GM12878 (cell line): ENCODE measurements at regions of chr11 and their contacts with region 1.

Region 1: GRCh38 chr11:96342961-96343711 is at the start of gene MAML2:
- DNase-seq: peak; percentile 91
- ATAC-seq: peak; percentile 81
- H3K4me3 ChIP-seq: peak within 1 kb of the TSS; percentile 100
- H3K27ac ChIP-seq: peak within 1 kb of the TSS; percentile 80
- H3K4me1 ChIP-seq: peaks cover 12% of the 10 kb centered on the region
- H3K27me3 ChIP-seq: no peaks in the 10 kb centered on the region
- CTCF ChIP-seq: peak; percentile 93 to 98 (median 96)
- EP300 ChIP-seq: no peak; a peak in 1 of 4 replicates
- POLR2A ChIP-seq: no peak; the same call in 1 of the 2 replicates
- RAD21 ChIP-seq: peak; percentile 90
- polyA plus RNA-seq, gene MAML2: 2.5 to 2.6 TPM

Region 2: GRCh38 chr11:95790123-95790932 is 552.8 kb before region 1 on chr11 and contains the start of gene CEP57:
- CTCF ChIA-PET with region 1: interaction called, 16 read pairs
- POLR2A ChIA-PET with region 1: interaction called, 3 read pairs
- RAD21 ChIA-PET with region 1: interaction called, 3 read pairs
- SMC1A ChIA-PET with region 1: interaction called, 6 read pairs
- in situ Hi-C with region 1: no loop called
- intact Hi-C with region 1: no loop called
- DNase-seq: peak; percentile 92
- ATAC-seq: peak; percentile 73
- H3K4me3 ChIP-seq: peak within 1 kb of the TSS; percentile 87
- H3K27ac ChIP-seq: peak within 1 kb of the TSS; percentile 90
- H3K4me1 ChIP-seq: 0 out of 2 replicates have a peak, but pooled peaks cover 3% of the 10 kb centered on the region
- H3K27me3 ChIP-seq: no peaks in the 10 kb centered on the region
- CTCF ChIP-seq: no peak
- EP300 ChIP-seq: 0 out of 4 replicates have a peak, but pooled peaks of 1 of the 2 experiments have one; percentile 40
- POLR2A ChIP-seq: peak; percentile 77
- RAD21 ChIP-seq: no peak
- polyA plus RNA-seq, gene CEP57: 19.4 to 25.8 TPM

Region 3: DNA sequence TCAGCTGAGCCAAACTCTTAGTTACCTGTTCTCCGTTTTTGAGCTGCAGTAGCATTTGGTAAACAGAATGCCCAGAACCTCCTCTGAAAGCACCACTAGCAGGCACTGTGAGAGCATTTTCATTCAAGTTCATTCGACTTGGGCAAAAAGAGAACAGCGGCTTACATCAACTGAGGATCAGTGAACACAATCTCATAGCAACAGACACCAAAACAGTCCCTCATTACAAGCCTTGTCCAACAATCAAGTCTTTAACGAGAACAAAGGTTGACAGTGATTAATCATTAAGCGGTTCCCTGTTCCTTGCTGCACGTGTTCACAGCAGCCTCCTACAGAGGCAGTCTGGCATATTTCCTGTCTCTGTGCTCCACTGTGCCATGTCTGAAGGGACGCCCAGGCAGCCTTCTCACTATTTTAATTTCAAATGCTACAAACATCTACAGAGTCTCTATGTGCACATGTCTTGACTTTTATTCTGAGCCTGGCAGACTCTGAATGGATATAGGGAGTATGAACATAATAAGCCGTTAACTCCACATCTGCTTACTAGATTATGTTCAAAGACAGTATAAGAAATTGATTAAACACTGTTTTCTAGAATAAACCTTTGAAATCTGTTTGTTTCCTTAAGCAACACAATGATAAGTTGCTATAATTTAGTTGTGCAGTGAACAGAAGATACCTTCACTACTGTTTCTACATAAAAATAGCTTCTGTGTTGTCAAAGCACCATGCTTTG is 330.9 kb before region 1 on chr11:
- CTCF ChIA-PET with region 1: interaction called, 134 read pairs
- POLR2A ChIA-PET with region 1: interaction called, 18 read pairs
- RAD21 ChIA-PET with region 1: interaction called, 94 read pairs
- SMC1A ChIA-PET with region 1: interaction called, 147 read pairs
- in situ Hi-C with region 1: no loop called
- intact Hi-C with region 1: loop called (anchors 1 kb)
- DNase-seq: peak; percentile 96
- ATAC-seq: peak; percentile 93
- H3K4me3 ChIP-seq: no peak overlapping the region
- H3K27ac ChIP-seq: peak overlapping the region; percentile 59
- H3K4me1 ChIP-seq: peaks cover 32% of the 10 kb centered on the region
- H3K27me3 ChIP-seq: no peaks in the 10 kb centered on the region
- CTCF ChIP-seq: peak; percentile 78 to 91 (median 87)
- EP300 ChIP-seq: peak; percentile 76 to 86; a peak in 2 of 4 replicates
- POLR2A ChIP-seq: no peak
- RAD21 ChIP-seq: peak; percentile 84

Region 4: DNA sequence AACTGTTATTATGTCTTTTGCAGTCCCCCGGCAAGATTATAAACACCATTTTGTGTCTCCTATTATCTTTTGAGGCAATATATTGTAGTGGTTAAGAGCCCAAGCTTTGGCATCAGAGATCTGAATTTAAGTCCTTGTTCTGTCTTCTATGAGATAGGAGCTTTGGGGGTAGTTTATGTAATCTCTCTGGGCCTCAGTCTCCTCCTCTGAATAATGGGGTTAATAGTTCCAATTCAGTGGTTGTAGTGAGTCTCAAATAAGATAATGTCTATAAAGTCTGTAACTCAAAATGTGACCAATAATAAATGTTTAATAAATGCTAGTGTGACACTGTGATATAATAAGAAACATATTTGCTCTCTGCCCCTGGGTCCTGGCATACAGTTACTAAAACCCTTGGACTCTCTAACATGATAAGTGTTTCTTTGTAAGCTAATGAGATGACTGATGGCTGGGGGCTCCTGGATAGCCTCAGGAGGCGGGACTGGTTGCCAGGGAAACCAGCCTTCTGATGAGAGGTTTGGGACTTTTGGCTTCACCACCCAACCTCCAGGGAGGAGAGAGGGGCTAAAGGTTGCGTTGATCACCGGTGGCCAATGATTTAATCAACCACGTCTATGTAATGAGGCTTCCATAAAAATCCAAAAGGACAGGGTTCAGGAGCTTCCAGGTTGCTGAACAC is 235.9 kb before region 1 on chr11:
- CTCF ChIA-PET with region 1: interaction called, 3 read pairs
- POLR2A ChIA-PET with region 1: no interaction called
- RAD21 ChIA-PET with region 1: interaction called, 3 read pairs
- SMC1A ChIA-PET with region 1: interaction called, 11 read pairs
- in situ Hi-C with region 1: no loop called
- intact Hi-C with region 1: loop called (anchors 2 kb)
- DNase-seq: no peak
- ATAC-seq: no peak
- H3K4me3 ChIP-seq: no peak overlapping the region
- H3K27ac ChIP-seq: no peak overlapping the region
- H3K4me1 ChIP-seq: peaks cover 12% of the 10 kb centered on the region
- H3K27me3 ChIP-seq: no peaks in the 10 kb centered on the region
- CTCF ChIP-seq: no peak
- EP300 ChIP-seq: no peak
- POLR2A ChIP-seq: no peak
- RAD21 ChIP-seq: no peak

Region 5: GRCh38 chr11:96197801-96198701 is 145.1 kb before region 1 on chr11:
- CTCF ChIA-PET with region 1: interaction called, 12 read pairs
- POLR2A ChIA-PET with region 1: interaction called, 3 read pairs
- RAD21 ChIA-PET with region 1: interaction called, 9 read pairs
- SMC1A ChIA-PET with region 1: interaction called, 21 read pairs
- in situ Hi-C with region 1: no loop called
- intact Hi-C with region 1: no loop called
- DNase-seq: no peak
- ATAC-seq: peak; percentile 83
- H3K4me3 ChIP-seq: 0 out of 2 replicates have a peak overlapping the region, but pooled peaks have one; percentile 3
- H3K27ac ChIP-seq: peak overlapping the region; percentile 98
- H3K4me1 ChIP-seq: peaks cover 41% of the 10 kb centered on the region
- H3K27me3 ChIP-seq: no peaks in the 10 kb centered on the region
- CTCF ChIP-seq: no peak
- EP300 ChIP-seq: peak; percentile 82 to 97
- POLR2A ChIP-seq: no peak
- RAD21 ChIP-seq: no peak; the same call in 1 of the 2 replicates

Region 6: DNA sequence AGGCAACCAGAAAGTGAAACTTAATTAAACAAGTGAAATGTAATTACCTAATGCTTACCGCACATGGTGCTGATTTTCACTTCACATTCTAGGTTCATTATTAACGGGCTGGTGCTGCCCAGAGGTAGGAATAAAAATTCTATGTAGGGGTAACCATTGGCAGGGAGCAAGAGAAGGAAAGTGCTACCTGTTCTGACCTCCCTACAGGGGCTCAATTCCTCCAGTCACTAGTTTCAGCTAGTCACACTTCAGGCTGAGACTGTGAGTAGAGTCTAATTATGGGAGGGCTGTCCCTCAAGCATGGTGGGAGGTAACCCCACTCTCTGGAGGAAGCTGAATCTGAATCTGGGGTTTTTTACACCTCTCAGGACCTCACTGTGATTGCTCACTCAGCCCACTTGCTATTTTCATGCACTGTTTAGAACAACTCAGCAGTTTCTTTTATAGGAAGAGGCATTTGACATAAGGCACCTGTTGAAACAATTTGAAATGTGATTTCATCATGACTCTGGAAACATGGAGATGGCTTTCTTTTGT is 75.6 kb before region 1 on chr11:
- CTCF ChIA-PET with region 1: interaction called, 12 read pairs
- POLR2A ChIA-PET with region 1: interaction called, 7 read pairs
- RAD21 ChIA-PET with region 1: interaction called, 55 read pairs
- SMC1A ChIA-PET with region 1: interaction called, 57 read pairs
- in situ Hi-C with region 1: no loop called
- intact Hi-C with region 1: loop called (anchors 2 kb)
- DNase-seq: peak; percentile 95
- ATAC-seq: peak; percentile 97
- H3K4me3 ChIP-seq: no peak overlapping the region
- H3K27ac ChIP-seq: peak overlapping the region; percentile 73
- H3K4me1 ChIP-seq: peaks cover 21% of the 10 kb centered on the region
- H3K27me3 ChIP-seq: no peaks in the 10 kb centered on the region
- CTCF ChIP-seq: no peak
- EP300 ChIP-seq: no peak; a peak in 1 of 4 replicates
- POLR2A ChIP-seq: peak; percentile 38; the same call in 1 of the 2 replicates
- RAD21 ChIP-seq: peak; percentile 21; the same call in 1 of the 2 replicates

Region 7: DNA sequence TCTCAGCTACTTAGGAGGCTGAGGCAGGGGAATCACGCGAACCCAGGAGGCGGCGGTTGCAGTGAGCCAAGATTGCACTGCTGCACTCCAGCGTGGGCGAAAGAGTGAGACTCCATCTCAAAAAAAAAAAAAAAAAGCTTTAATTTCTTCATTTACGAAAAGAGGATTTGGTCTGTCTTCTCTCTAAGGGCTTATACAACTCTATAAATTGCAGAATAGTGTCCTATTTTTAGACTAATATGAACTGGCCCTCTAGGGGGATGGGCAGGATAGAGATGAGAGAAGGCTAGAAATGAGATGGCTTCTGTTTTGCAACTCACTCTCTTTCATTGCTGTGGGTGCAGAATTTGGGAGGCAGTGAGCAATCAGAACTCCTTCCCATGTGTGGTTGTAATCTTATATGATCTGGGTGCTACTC is 11.4 kb before region 1 on chr11:
- CTCF ChIA-PET with region 1: interaction called, 26 read pairs
- POLR2A ChIA-PET with region 1: interaction called, 3 read pairs
- RAD21 ChIA-PET with region 1: interaction called, 3 read pairs
- SMC1A ChIA-PET with region 1: interaction called, 10 read pairs
- in situ Hi-C with region 1: no loop called
- intact Hi-C with region 1: no loop called
- DNase-seq: no peak
- ATAC-seq: peak; percentile 50
- H3K4me3 ChIP-seq: no peak overlapping the region
- H3K27ac ChIP-seq: no peak overlapping the region
- H3K4me1 ChIP-seq: peaks cover 12% of the 10 kb centered on the region; the same call in 1 of the 2 replicates
- H3K27me3 ChIP-seq: no peaks in the 10 kb centered on the region
- CTCF ChIP-seq: no peak
- EP300 ChIP-seq: no peak
- POLR2A ChIP-seq: no peak
- RAD21 ChIP-seq: no peak